ENCODE measurements at regions of chr11 and their contacts with region 1.

Region 1: GRCh38 chr11:122628810-122629555 is 26.5 kb upstream of the UBASH3B start:
- DNase-seq: peak; percentile 60 to 64 (median 62)
- H3K4me3 ChIP-seq: no peak overlapping the region
- H3K4me3 Mint-ChIP-seq: no peak overlapping the region
- H3K27ac ChIP-seq: no peak overlapping the region
- H3K27ac Mint-ChIP-seq: no peak overlapping the region
- H3K4me1 ChIP-seq: peaks cover 8% of the 10 kb centered on the region
- H3K4me1 Mint-ChIP-seq: peaks cover 0 to 10% (median 6%) of the 10 kb centered on the region in 4 donors
- H3K27me3 ChIP-seq: no peaks in the 10 kb centered on the region
- H3K27me3 Mint-ChIP-seq: peaks cover 0 to 1% of the 10 kb centered on the region in 2 donors

Region 2: GRCh38 chr11:122578168-122578825 is 50.7 kb before region 1 on chr11:
- CTCF ChIA-PET with region 1: interaction called, 9 read pairs
- POLR2A ChIA-PET with region 1: interaction called, 4 read pairs
- intact Hi-C with region 1: loop called (anchors 1 kb)
- DNase-seq: no peak
- H3K4me3 ChIP-seq: no peak overlapping the region
- H3K4me3 Mint-ChIP-seq: no peak overlapping the region
- H3K27ac ChIP-seq: no peak overlapping the region
- H3K27ac Mint-ChIP-seq: no peak overlapping the region
- H3K4me1 ChIP-seq: peaks cover 8% of the 10 kb centered on the region
- H3K4me1 Mint-ChIP-seq: peaks cover 5 to 9% (median 9%) of the 10 kb centered on the region in 4 donors
- H3K27me3 ChIP-seq: no peaks in the 10 kb centered on the region
- H3K27me3 Mint-ChIP-seq: peaks cover 2 to 7% of the 10 kb centered on the region in 2 donors

Region 3: DNA sequence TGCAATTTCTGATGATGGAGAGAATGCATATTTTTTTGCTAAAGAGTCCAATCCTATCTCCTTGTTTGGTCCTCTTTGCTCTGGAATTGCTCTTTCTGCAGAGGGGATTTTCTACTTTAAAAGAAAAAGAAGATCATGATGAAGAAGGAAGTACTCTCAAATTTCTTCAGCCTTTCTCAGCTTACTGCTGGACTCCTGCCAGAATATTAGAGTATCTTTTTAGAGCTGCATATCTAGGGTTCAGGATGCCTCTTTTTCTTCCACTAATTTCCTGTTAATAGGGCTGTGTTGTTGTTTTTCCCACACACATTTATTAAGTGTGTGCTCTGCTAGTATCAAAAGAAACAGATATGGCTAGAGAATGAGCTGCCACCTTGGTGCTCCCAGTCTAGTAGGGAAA is 44.7 kb after region 1 on chr11:
- CTCF ChIA-PET with region 1: interaction called, 25 read pairs
- POLR2A ChIA-PET with region 1: interaction called, 3 read pairs
- intact Hi-C with region 1: loop called (anchors 2 kb)
- DNase-seq: no peak
- H3K4me3 ChIP-seq: no peak overlapping the region
- H3K4me3 Mint-ChIP-seq: peak overlapping the region in 4 of 8 donors; percentile 22 to 60 (median 34)
- H3K27ac ChIP-seq: no peak overlapping the region
- H3K27ac Mint-ChIP-seq: peak overlapping the region in 6 of 7 donors; percentile 36 to 77 (median 61)
- H3K4me1 ChIP-seq: peaks cover 90% of the 10 kb centered on the region
- H3K4me1 Mint-ChIP-seq: peaks cover 50 to 91% (median 72%) of the 10 kb centered on the region in 4 donors
- H3K27me3 ChIP-seq: no peaks in the 10 kb centered on the region
- H3K27me3 Mint-ChIP-seq: no peaks in the 10 kb centered on the region

Region 4: GRCh38 chr11:122749005-122749687 is 120.2 kb after region 1 on chr11:
- CTCF ChIA-PET with region 1: interaction called, 472 read pairs
- POLR2A ChIA-PET with region 1: interaction called, 4 read pairs
- intact Hi-C with region 1: loop called (anchors 1 kb)
- DNase-seq: peak; percentile 31 to 70 (median 49)
- H3K4me3 ChIP-seq: no peak overlapping the region
- H3K4me3 Mint-ChIP-seq: peak overlapping the region in 5 of 8 donors; percentile 19 to 56 (median 47)
- H3K27ac ChIP-seq: no peak overlapping the region
- H3K27ac Mint-ChIP-seq: peak overlapping the region in 5 of 7 donors; percentile 31 to 78 (median 65)
- H3K4me1 ChIP-seq: peaks cover 56% of the 10 kb centered on the region
- H3K4me1 Mint-ChIP-seq: peaks cover 20 to 60% (median 40%) of the 10 kb centered on the region in 4 donors
- H3K27me3 ChIP-seq: no peaks in the 10 kb centered on the region
- H3K27me3 Mint-ChIP-seq: no peaks in the 10 kb centered on the region

Region 5: DNA sequence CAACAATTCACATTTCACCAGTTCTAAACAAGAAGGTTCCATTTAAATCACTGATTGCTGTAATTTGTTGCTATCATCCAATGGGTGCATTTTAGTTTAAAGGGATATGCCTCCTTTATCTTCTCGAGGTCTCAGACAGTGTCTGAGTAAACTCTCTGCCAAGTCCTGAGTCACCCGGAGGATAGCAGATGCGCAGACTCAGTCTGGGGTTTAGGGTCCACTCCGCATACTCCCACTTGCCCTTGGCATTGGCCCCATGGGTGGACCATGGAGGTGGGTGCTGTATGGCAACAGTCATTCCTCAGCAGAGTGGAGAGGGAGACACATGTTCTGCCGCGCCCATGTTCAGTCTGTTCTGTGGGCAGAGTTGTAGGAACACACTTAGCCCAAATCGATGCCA is 144.0 kb after region 1 on chr11:
- CTCF ChIA-PET with region 1: interaction called, 93 read pairs
- POLR2A ChIA-PET with region 1: no interaction called
- intact Hi-C with region 1: no loop called
- DNase-seq: no peak
- H3K4me3 ChIP-seq: no peak overlapping the region
- H3K4me3 Mint-ChIP-seq: no peak overlapping the region
- H3K27ac ChIP-seq: no peak overlapping the region
- H3K27ac Mint-ChIP-seq: peak overlapping the region in 2 of 7 donors; percentile 75 to 76
- H3K4me1 ChIP-seq: no peaks in the 10 kb centered on the region
- H3K4me1 Mint-ChIP-seq: peaks cover 7 to 27% (median 14%) of the 10 kb centered on the region in 4 donors
- H3K27me3 ChIP-seq: no peaks in the 10 kb centered on the region
- H3K27me3 Mint-ChIP-seq: no peaks in the 10 kb centered on the region

Region 6: DNA sequence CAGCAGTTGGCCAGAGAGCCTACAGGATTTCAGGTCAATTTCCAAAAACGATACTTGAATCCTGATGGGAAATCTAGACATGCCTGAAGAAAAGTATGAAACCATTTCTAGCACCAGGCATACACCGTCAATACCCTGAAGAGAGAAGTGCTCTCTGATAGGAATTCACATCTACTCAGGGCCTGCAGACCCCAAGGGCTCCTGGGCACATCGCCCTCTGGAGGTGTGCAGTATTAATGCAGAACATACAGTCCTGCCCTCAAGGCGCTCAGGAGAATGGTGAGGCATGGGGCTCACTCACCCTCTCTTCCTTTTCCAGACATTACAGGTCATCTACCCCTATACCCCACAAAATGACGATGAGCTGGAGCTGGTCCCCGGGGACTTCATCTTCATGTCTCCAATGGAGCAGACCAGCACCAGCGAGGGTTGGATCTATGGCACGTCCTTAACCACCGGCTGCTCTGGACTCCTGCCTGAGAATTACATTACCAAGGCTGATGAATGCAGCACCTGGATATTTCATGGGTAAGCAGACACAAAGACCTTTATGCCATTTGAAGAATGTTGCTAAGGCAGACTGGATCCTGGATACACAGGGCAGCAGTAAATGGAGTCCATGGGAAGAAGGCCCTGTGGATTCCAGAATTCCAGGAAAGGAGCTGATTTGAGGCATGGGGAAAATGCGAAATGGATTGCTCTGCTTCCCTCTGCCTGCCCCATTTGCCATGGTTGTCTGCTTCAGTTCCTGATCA is 160.0 kb after region 1 on chr11:
- CTCF ChIA-PET with region 1: interaction called, 136 read pairs
- POLR2A ChIA-PET with region 1: interaction called, 3 read pairs
- intact Hi-C with region 1: no loop called
- DNase-seq: no peak
- H3K4me3 ChIP-seq: no peak overlapping the region
- H3K4me3 Mint-ChIP-seq: no peak overlapping the region
- H3K27ac ChIP-seq: no peak overlapping the region
- H3K27ac Mint-ChIP-seq: no peak overlapping the region
- H3K4me1 ChIP-seq: no peaks in the 10 kb centered on the region
- H3K4me1 Mint-ChIP-seq: peaks cover 0 to 2% (median 0%) of the 10 kb centered on the region in 4 donors
- H3K27me3 ChIP-seq: no peaks in the 10 kb centered on the region
- H3K27me3 Mint-ChIP-seq: no peaks in the 10 kb centered on the region